SK-N-SH (cell line): ENCODE measurements at regions of chr1 and their contacts with region 1.

Region 1: GRCh38 chr1:17661546-17662157 is 93.5 kb upstream of the ACTL8 start:
- DNase-seq: peak; percentile 93
- H3K4me3 ChIP-seq: no peak overlapping the region; a peak in 1 of 4 replicates
- H3K27ac ChIP-seq: no peak overlapping the region
- H3K4me1 ChIP-seq: peaks cover 0 to 3% of the 10 kb centered on the region in 2 experiments; a peak in 1 of 4 replicates
- H3K27me3 ChIP-seq: no peaks in the 10 kb centered on the region
- CTCF ChIP-seq: peak; percentile 91
- EP300 ChIP-seq: no peak
- RAD21 ChIP-seq: peak; percentile 94

Region 2: DNA sequence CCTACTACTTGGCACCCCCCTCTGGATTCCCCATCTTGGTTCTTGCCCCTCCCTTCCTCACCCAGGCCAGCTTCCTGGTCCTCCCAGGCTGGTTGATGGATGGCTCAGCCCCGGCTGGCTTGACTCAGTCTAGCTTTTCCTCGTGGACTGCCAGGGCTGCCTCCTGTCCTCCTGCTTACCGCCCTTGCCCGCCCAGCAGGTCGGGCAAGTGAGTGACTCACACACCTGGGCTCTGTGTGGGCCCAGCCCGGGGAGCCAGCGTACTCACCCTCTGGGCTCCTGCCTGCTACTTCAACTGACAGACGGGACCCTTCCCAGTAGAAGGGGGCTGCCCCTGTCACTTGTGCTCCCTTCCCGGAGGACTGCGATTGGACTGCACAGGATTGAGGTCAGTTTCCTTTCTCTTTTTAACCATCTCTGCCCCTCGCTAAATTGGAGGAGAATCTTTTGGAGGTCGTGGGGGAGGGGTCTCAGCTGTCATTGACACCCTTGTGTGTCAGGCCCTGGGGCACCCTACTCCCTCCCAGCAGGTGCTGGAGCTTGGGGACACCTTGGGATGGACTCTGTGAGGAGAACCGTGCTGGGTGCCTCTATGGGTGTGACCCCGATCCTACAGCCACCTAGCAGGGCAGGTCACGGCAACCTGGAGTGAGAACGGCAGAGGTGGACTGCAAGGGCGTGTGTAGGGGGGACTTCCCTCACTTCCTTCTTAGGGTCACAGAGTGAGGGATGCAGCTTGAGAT is 141.4 kb before region 1 on chr1:
- CTCF ChIA-PET with region 1: no interaction called
- POLR2A ChIA-PET with region 1: no interaction called
- DNase-seq: no peak
- H3K4me3 ChIP-seq: no peak overlapping the region
- H3K27ac ChIP-seq: no peak overlapping the region
- H3K4me1 ChIP-seq: peaks cover 0 to 3% of the 10 kb centered on the region in 2 experiments; a peak in 1 of 4 replicates
- H3K27me3 ChIP-seq: no peaks in the 10 kb centered on the region
- CTCF ChIP-seq: no peak
- EP300 ChIP-seq: no peak
- RAD21 ChIP-seq: no peak

Region 3: DNA sequence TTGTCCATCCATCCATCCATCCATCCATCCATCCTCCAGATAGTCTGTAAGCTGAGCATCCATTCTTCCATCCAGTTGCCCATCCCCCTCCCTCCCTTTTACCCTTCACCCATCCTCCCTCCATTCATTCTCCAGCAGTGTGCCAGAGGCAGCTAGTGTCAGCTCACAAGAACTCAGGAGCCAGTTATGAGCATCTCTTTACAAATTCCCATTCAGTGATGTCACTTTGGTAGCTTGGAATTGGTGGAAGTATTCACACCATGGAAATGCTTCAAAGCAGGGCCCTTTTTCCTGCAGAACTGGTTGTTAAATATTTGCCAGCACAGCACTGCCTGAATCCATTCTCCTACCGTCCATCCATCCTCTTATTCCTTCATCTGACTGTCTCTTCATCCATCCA is 49.7 kb before region 1 on chr1:
- CTCF ChIA-PET with region 1: interaction called, 11 read pairs
- POLR2A ChIA-PET with region 1: no interaction called
- DNase-seq: no peak
- H3K4me3 ChIP-seq: no peak overlapping the region
- H3K27ac ChIP-seq: no peak overlapping the region
- H3K4me1 ChIP-seq: no peaks in the 10 kb centered on the region
- H3K27me3 ChIP-seq: no peaks in the 10 kb centered on the region
- CTCF ChIP-seq: no peak
- EP300 ChIP-seq: no peak
- RAD21 ChIP-seq: no peak

Region 4: DNA sequence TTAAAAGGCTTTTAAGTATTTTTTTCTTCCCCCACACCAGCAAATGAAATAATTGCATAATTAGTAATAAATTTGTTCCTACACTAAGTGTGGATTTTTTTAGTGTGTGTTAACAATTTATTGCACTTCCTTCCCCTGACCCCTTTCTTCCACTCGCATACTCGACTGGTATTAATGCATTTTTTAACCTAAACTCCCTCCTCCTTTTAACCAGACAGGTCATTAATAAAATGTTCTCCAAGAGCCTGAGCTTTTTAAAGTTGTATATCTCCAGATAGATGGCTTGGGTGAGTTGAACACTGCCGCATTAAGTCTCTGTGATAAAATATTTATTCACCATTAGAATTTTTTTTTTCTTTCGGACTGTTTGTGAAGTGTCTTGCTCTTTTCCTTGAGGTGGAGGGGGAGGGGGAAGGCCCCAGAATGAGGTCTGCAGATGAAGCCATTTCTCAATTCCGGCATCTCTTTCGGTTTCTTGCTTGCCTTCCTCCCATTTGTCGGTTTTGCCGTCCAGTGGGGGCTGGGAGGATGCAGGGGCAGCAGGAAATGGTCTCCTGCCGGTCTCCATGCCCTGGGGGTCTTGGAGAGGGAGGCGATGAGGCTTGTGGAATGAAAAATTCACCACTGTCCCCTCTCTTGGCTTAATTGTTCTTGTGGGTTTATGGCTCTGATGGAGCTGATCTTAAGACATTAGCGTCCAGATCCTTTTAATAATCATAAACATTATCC is 29.4 kb after region 1 on chr1:
- CTCF ChIA-PET with region 1: interaction called, 37 read pairs
- POLR2A ChIA-PET with region 1: no interaction called
- DNase-seq: no peak
- H3K4me3 ChIP-seq: no peak overlapping the region
- H3K27ac ChIP-seq: no peak overlapping the region; a peak in 1 of 4 replicates
- H3K4me1 ChIP-seq: peaks cover under 1 to 27% of the 10 kb centered on the region in 2 experiments; a peak in 2 of 4 replicates
- H3K27me3 ChIP-seq: no peaks in the 10 kb centered on the region
- CTCF ChIP-seq: no peak
- EP300 ChIP-seq: no peak
- RAD21 ChIP-seq: no peak

Region 5: GRCh38 chr1:17773591-17774326 is 112.1 kb after region 1 on chr1:
- CTCF ChIA-PET with region 1: interaction called, 20 read pairs
- POLR2A ChIA-PET with region 1: no interaction called
- DNase-seq: no peak
- H3K4me3 ChIP-seq: no peak overlapping the region
- H3K27ac ChIP-seq: peak overlapping the region in 1 of 2 experiments; percentile 64; a peak in 1 of 4 replicates
- H3K4me1 ChIP-seq: peaks cover 0 to 34% of the 10 kb centered on the region in 2 experiments; a peak in 2 of 4 replicates
- H3K27me3 ChIP-seq: no peaks in the 10 kb centered on the region
- CTCF ChIP-seq: no peak
- EP300 ChIP-seq: no peak
- RAD21 ChIP-seq: no peak

Region 6: GRCh38 chr1:17893891-17894631 is 232.4 kb after region 1 on chr1:
- CTCF ChIA-PET with region 1: interaction called, 10 read pairs
- POLR2A ChIA-PET with region 1: no interaction called
- DNase-seq: no peak
- H3K4me3 ChIP-seq: no peak overlapping the region
- H3K27ac ChIP-seq: no peak overlapping the region
- H3K4me1 ChIP-seq: peaks cover 0 to 14% of the 10 kb centered on the region in 2 experiments; a peak in 1 of 4 replicates
- H3K27me3 ChIP-seq: no peaks in the 10 kb centered on the region; the same call in 1 of the 2 replicates
- CTCF ChIP-seq: no peak
- EP300 ChIP-seq: no peak
- RAD21 ChIP-seq: no peak

Region 7: GRCh38 chr1:18077657-18078215 is 416.1 kb after region 1 on chr1:
- CTCF ChIA-PET with region 1: no interaction called
- POLR2A ChIA-PET with region 1: no interaction called
- DNase-seq: no peak
- H3K4me3 ChIP-seq: no peak overlapping the region
- H3K27ac ChIP-seq: no peak overlapping the region
- H3K4me1 ChIP-seq: no peaks in the 10 kb centered on the region; a peak in 1 of 4 replicates
- H3K27me3 ChIP-seq: no peaks in the 10 kb centered on the region
- CTCF ChIP-seq: no peak
- EP300 ChIP-seq: no peak
- RAD21 ChIP-seq: no peak

Region 8: GRCh38 chr1:18100491-18101063 is 438.9 kb after region 1 on chr1:
- CTCF ChIA-PET with region 1: interaction called, 15 read pairs
- POLR2A ChIA-PET with region 1: no interaction called
- DNase-seq: peak; percentile 70
- H3K4me3 ChIP-seq: no peak overlapping the region; a peak in 1 of 4 replicates
- H3K27ac ChIP-seq: no peak overlapping the region
- H3K4me1 ChIP-seq: no peaks in the 10 kb centered on the region; a peak in 1 of 4 replicates
- H3K27me3 ChIP-seq: no peaks in the 10 kb centered on the region
- CTCF ChIP-seq: peak; percentile 84
- EP300 ChIP-seq: no peak
- RAD21 ChIP-seq: peak; percentile 80